Psoas muscle (tissue), 8 donors: ENCODE measurements at regions of chr17 and their contacts with region 1.

Region 1: DNA sequence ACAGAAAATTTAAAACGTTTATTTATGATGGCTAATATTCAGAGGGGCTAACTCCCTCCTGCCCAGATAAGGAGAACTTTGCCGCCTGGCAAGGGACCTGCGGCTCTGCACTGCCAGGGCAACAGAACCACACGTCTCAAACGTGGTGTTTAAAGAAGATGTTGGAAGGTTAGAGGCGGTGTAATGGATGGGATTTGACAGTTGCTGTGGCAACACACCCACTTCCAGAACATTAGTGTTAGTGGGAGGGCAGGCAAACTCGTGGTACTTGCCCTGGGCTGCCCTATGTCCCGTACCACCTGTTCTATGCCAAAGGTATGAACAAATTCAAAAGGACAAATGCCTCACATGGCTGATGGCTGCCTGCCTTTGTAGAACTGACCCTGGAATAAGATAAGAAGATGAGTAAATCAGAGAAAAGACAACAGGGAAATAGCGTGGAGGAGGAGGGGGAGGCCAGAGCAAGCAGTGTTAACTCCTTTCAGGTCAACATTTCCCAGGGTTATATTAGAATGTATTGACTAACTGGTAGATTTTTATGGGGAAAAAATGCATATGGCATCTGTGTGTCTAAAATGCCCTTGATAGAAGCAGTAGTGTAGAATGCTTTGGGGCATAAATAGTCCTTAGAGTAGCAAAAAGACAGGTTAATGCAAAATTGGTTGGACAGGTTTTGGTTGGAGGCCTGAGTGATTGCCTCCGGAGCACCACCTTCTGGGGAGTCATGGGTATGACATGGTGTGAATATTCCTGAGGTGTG is 30.8 kb downstream of the HLF start:
- DNase-seq: peak; percentile 34 to 56
- ATAC-seq: peak; percentile 88 to 96 (median 92)
- H3K4me3 ChIP-seq: no peak overlapping the region
- H3K27ac ChIP-seq: no peak overlapping the region
- H3K4me1 ChIP-seq: no peaks in the 10 kb centered on the region
- H3K27me3 ChIP-seq: no peaks in the 10 kb centered on the region
- CTCF ChIP-seq: peak; percentile 87

Region 2: GRCh38 chr17:54992797-54993639 is 302.6 kb before region 1 on chr17:
- intact Hi-C with region 1: loop called (anchors 5 kb)
- DNase-seq: no peak
- ATAC-seq: peak in 3 of 4 donors; percentile 46 to 73 (median 66)
- H3K4me3 ChIP-seq: no peak overlapping the region
- H3K27ac ChIP-seq: no peak overlapping the region
- H3K4me1 ChIP-seq: no peaks in the 10 kb centered on the region
- H3K27me3 ChIP-seq: no peaks in the 10 kb centered on the region
- CTCF ChIP-seq: peak; percentile 72

Region 3: GRCh38 chr17:55053855-55054254 is 241.7 kb before region 1 on chr17:
- intact Hi-C with region 1: loop called in 1 of 2 experiments (anchors 5 kb)
- DNase-seq: no peak
- ATAC-seq: no peak
- H3K4me3 ChIP-seq: no peak overlapping the region
- H3K27ac ChIP-seq: no peak overlapping the region
- H3K4me1 ChIP-seq: no peaks in the 10 kb centered on the region
- H3K27me3 ChIP-seq: no peaks in the 10 kb centered on the region
- CTCF ChIP-seq: peak; percentile 32

Region 4: GRCh38 chr17:55238179-55238930 is 57.2 kb before region 1 on chr17:
- intact Hi-C with region 1: loop called in 1 of 2 experiments (anchors 5 kb)
- DNase-seq: peak; percentile 94 to 97
- ATAC-seq: peak; percentile 98 to 100 (median 100)
- H3K4me3 ChIP-seq: peak overlapping the region; percentile 68
- H3K27ac ChIP-seq: peak overlapping the region; percentile 71
- H3K4me1 ChIP-seq: peaks cover 6% of the 10 kb centered on the region
- H3K27me3 ChIP-seq: peaks cover 0 to 2% (median 0%) of the 10 kb centered on the region in 3 donors
- CTCF ChIP-seq: no peak

Region 5: DNA sequence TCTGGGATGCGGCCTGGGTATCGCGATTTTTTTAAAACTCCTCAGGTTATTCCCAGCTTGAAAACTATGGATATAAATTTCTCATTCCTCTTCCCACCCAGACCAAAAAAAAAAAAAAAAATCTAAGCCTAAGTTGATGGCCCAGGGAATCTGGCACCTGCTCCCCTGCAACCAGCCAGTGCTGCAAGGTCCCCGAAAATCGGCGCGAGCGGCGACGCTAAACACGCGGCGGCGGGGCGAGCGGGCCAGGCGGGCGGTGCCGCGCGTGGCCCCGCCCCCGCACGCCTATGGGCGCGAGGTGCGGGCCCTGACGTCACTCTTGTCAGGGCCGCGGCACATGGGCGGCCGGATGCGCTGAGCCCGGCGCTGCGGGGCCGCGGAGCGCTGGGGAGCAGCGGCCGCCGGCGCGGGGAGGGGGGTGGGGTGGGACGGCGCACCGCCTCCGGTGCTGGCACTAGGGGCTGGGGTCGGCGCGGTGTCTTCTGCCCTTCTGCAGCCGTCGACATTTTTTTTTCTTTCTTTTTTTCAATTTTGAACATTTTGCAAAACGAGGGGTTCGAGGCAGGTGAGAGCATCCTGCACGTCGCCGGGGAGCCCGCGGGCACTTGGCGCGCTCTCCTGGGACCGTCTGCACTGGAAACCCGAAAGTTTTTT is 30.8 kb before region 1 on chr17 and contains the start of gene HLF:
- intact Hi-C with region 1: loop called in 1 of 2 experiments (anchors 5 kb)
- DNase-seq: peak; percentile 88 to 92
- ATAC-seq: peak; percentile 95 to 98 (median 96)
- H3K4me3 ChIP-seq: peak within 1 kb of the TSS; percentile 74
- H3K27ac ChIP-seq: peak within 1 kb of the TSS; percentile 61
- H3K4me1 ChIP-seq: peaks cover 14% of the 10 kb centered on the region
- H3K27me3 ChIP-seq: no peaks in the 10 kb centered on the region
- CTCF ChIP-seq: no peak
- total RNA-seq, gene HLF: 3.7 to 5.0 (median 4.4) TPM

Region 6: DNA sequence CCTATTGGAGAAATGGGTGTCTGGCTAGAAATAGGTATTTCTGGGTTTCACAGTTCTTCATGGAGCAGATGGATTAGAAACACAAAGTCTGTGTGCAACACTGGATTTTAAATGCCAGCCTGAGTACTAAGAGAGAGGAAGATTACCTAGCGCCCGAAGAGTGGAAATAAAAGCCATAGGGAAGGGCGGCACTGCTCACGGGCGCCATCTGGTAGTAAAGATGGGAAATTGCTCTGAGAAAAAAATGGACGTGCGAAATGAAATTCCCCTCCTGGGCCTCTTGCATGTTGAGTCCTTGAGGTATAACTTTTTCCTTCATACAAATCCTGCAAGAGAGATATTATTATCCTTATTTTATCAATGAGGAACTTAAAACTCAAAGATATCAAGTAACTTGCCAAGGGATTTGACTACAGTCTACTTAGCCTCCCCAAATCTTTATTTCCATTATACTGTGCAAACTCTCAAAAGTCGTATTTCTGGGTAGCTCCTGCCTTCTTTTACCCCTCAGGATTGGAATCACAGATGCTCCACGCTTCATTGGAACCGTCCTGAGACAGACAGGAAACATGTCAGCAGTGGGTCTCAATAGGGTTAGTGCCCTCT is 53.3 kb after region 1 on chr17:
- intact Hi-C with region 1: loop called in 1 of 2 experiments (anchors 2 kb)
- DNase-seq: peak; percentile 26 to 54
- ATAC-seq: peak; percentile 71 to 87 (median 74)
- H3K4me3 ChIP-seq: no peak overlapping the region
- H3K27ac ChIP-seq: no peak overlapping the region
- H3K4me1 ChIP-seq: no peaks in the 10 kb centered on the region
- H3K27me3 ChIP-seq: no peaks in the 10 kb centered on the region
- CTCF ChIP-seq: peak; percentile 90